Activated B cell treated with CpG ODN at 0.5 μM for 24 hours (primary cell): ENCODE measurements at regions of chr6 and their contacts with region 1.

Region 1: GRCh38 chr6:6856538-6857523 is 250.9 kb upstream of the RREB1 start:
- DNase-seq: peak; percentile 32
- ATAC-seq: peak; percentile 91
- H3K4me3 Mint-ChIP-seq: peak overlapping the region; percentile 55
- H3K27ac Mint-ChIP-seq: peak overlapping the region; percentile 54
- H3K4me1 Mint-ChIP-seq: peaks cover 33% of the 10 kb centered on the region
- H3K27me3 Mint-ChIP-seq: no peaks in the 10 kb centered on the region
- CTCF ChIP-seq: no peak

Region 2: GRCh38 chr6:6816716-6817115 is 40.1 kb before region 1 on chr6:
- CTCF ChIA-PET with region 1: no interaction called
- POLR2A ChIA-PET with region 1: no interaction called
- intact Hi-C with region 1: loop called (anchors 5 kb)
- DNase-seq: no peak
- ATAC-seq: peak; percentile 49
- H3K4me3 Mint-ChIP-seq: no peak overlapping the region
- H3K27ac Mint-ChIP-seq: no peak overlapping the region
- H3K4me1 Mint-ChIP-seq: peaks cover 27% of the 10 kb centered on the region
- H3K27me3 Mint-ChIP-seq: peaks cover 5% of the 10 kb centered on the region
- CTCF ChIP-seq: no peak

Region 3: DNA sequence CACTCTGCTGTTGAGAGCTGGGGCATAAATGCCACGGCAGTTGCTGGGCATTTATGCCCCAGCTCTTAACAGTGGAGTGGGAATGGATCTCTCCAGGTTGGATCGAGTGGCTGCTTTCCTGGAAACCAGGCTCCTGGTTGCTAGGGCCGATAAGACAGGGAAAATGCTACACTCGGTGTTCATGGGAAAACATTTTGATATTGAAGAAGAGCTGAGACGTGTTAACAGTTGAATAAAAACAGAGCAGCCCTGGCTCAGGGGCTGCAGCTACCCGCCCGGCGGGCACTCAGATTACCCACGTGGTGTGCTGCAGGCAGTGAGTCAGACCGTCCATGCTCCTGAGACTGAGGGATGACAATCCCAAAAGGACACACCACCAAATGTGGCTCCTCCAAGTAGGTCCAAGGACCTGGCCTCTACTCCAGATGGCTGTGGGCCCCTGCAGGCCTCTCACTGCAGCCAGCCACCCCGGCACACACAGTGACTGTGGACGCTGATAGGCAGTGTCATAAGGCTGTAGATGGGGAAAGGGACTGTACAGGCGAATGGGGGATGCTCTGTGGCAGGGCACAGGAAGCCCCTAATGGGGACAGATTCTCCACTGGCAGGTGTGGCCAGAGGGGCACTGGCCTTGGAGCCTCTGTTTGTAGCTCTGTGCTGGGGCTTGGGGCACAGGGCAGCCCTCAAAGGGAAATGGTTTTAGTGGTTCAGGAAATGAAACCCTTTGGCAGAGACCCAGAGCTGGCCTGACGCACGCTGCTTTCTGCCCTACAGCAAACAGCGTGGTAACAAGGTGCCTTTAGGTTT is 30.5 kb before region 1 on chr6:
- CTCF ChIA-PET with region 1: no interaction called
- POLR2A ChIA-PET with region 1: no interaction called
- intact Hi-C with region 1: loop called (anchors 1 kb)
- DNase-seq: peak; percentile 35
- ATAC-seq: peak; percentile 95
- H3K4me3 Mint-ChIP-seq: no peak overlapping the region
- H3K27ac Mint-ChIP-seq: peak overlapping the region; percentile 59
- H3K4me1 Mint-ChIP-seq: peaks cover 31% of the 10 kb centered on the region
- H3K27me3 Mint-ChIP-seq: peaks cover 12% of the 10 kb centered on the region
- CTCF ChIP-seq: no peak

Region 4: DNA sequence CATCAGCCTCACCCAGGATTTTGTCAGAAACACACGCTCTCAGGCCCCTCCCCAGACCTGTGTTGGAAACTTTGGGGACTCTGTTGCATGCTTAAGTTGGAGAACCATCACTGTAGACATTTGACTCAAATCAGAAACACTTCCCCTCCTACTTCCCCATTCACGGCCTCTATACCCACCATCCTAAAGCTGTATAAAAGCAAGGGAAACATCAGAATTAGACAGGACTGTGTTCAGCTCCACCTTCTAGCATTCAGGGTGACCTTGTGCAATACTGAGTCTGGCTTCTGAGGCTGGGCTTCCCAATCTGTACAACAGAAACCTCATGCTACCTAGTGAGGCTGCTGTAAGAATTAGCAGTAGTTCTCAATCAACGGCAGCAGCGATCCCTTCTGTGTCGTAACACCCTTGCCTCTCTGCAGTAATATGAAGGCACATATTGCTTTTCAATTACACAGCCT is 16.0 kb before region 1 on chr6:
- CTCF ChIA-PET with region 1: no interaction called
- POLR2A ChIA-PET with region 1: interaction called, 3 read pairs
- intact Hi-C with region 1: loop called (anchors 2 kb)
- DNase-seq: no peak
- ATAC-seq: peak; percentile 89
- H3K4me3 Mint-ChIP-seq: no peak overlapping the region
- H3K27ac Mint-ChIP-seq: no peak overlapping the region
- H3K4me1 Mint-ChIP-seq: peaks cover 11% of the 10 kb centered on the region
- H3K27me3 Mint-ChIP-seq: peaks cover 4% of the 10 kb centered on the region
- CTCF ChIP-seq: no peak

Region 5: GRCh38 chr6:7021301-7021700 is 164.5 kb after region 1 on chr6:
- CTCF ChIA-PET with region 1: no interaction called
- POLR2A ChIA-PET with region 1: no interaction called
- intact Hi-C with region 1: no loop called
- DNase-seq: no peak
- ATAC-seq: no peak
- H3K4me3 Mint-ChIP-seq: no peak overlapping the region
- H3K27ac Mint-ChIP-seq: no peak overlapping the region
- H3K4me1 Mint-ChIP-seq: no peaks in the 10 kb centered on the region
- H3K27me3 Mint-ChIP-seq: peaks cover 3% of the 10 kb centered on the region
- CTCF ChIP-seq: no peak